H1 (cell line): ENCODE measurements at regions of chr6 and their contacts with region 1.

Region 1: GRCh38 chr6:3748208-3749066 is 3.1 kb downstream of the PXDC1 start:
- DNase-seq: peak in 1 of 2 experiments; percentile 81
- H3K4me3 ChIP-seq: no peak overlapping the region
- H3K27ac ChIP-seq: no peak overlapping the region
- H3K4me1 ChIP-seq: peaks cover 0 to 14% (median 5%) of the 10 kb centered on the region in 4 experiments; a peak in 5 of 7 replicates
- H3K27me3 ChIP-seq: peaks cover 12 to 45% (median 39%) of the 10 kb centered on the region in 4 experiments
- CTCF ChIP-seq: peak in 2 of 3 experiments; percentile 79 to 92; a peak in 3 of 4 replicates
- EP300 ChIP-seq: no peak
- POLR2A ChIP-seq: no peak
- RAD21 ChIP-seq: peak; percentile 72 to 80

Region 2: DNA sequence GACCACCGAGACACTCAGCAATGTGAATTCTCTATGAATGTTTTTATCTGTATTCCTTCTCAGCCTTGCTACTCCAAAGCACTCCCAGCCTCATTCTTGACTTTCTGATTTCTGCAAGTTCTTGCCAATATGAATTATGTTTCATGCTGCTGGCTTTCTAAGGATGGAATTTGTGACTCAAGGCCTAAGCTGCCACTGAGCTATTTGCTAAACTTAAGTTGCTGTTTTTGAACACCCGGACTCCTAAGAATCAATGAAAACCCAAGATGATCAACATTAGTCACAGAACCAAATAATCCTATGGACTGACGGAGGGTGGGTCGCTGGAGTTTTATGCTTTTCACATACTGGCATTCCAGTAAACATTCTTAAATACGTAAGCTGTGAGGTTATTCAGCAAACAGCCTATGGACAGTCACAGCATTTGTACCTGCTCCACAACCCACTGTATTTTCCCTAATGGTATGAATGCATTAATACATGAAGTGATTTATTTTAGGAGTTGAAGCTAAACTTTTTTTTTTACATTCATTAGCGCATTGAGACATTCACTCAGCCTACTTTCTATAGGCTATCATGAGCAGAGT is 11.3 kb after region 1 on chr6:
- CTCF ChIA-PET with region 1: interaction called, 13 read pairs
- POLR2A ChIA-PET with region 1: no interaction called
- DNase-seq: no peak
- H3K4me3 ChIP-seq: no peak overlapping the region
- H3K27ac ChIP-seq: no peak overlapping the region
- H3K4me1 ChIP-seq: peaks cover 3 to 16% (median 7%) of the 10 kb centered on the region in 4 experiments; a peak in 6 of 7 replicates
- H3K27me3 ChIP-seq: no peaks in the 10 kb centered on the region; a peak in 2 of 7 replicates
- CTCF ChIP-seq: no peak
- EP300 ChIP-seq: no peak
- POLR2A ChIP-seq: no peak
- RAD21 ChIP-seq: no peak

Region 3: GRCh38 chr6:3861424-3861823 is 113.0 kb after region 1 on chr6:
- CTCF ChIA-PET with region 1: interaction called, 10 read pairs
- POLR2A ChIA-PET with region 1: no interaction called
- DNase-seq: no peak
- H3K4me3 ChIP-seq: no peak overlapping the region
- H3K27ac ChIP-seq: no peak overlapping the region
- H3K4me1 ChIP-seq: peaks cover 0 to 4% (median 0%) of the 10 kb centered on the region in 4 experiments; a peak in 2 of 7 replicates
- H3K27me3 ChIP-seq: no peaks in the 10 kb centered on the region
- CTCF ChIP-seq: no peak
- EP300 ChIP-seq: no peak
- POLR2A ChIP-seq: no peak
- RAD21 ChIP-seq: no peak

Region 4: GRCh38 chr6:3990692-3991501 is 242.5 kb after region 1 on chr6:
- CTCF ChIA-PET with region 1: interaction called, 10 read pairs
- POLR2A ChIA-PET with region 1: no interaction called
- DNase-seq: peak; percentile 73 to 93
- H3K4me3 ChIP-seq: no peak overlapping the region; a peak in 1 of 8 replicates
- H3K27ac ChIP-seq: no peak overlapping the region
- H3K4me1 ChIP-seq: peaks cover 2 to 14% (median 8%) of the 10 kb centered on the region in 4 experiments; a peak in 5 of 7 replicates
- H3K27me3 ChIP-seq: no peaks in the 10 kb centered on the region
- CTCF ChIP-seq: peak; percentile 91 to 98 (median 93)
- EP300 ChIP-seq: no peak
- POLR2A ChIP-seq: no peak
- RAD21 ChIP-seq: peak; percentile 90 to 96